SK-N-SH (cell line): ENCODE measurements at regions of chr1 and their contacts with region 1.

Region 1: DNA sequence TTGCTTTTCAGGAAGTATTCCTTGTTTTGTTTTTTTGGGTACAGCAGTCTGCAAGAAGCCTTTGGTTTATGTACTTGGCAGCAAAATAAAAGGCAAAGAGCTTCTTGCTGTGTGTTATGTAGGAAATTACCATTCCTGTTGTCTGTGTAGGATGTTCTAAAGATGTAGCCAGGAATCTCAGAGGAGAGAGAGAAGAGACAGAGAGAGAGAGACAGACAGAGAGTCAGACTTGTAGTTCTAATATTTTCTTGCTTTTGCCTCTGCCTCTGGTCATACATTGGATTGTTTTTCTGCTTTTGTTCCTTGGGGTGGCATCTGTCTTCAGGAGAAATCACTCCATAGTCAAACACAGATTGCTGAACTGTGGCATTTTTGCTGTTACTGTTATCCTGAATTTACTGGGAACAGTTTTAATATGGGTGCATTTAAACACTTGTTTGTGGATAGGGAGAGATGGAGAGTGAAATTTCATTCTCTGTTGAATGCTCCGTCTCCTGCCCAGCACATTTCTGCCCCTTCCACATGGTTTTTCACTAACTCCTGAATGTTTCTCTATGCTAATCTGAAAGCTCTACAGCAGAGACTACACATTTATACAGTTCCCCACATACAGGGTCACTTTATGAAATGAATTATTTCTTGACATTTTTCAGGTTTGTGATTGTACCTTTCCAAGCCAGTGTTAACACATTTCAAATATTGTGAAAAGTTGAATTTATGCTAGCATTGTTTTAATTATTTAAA is 49.8 kb downstream of the POU2F1 start:
- DNase-seq: no peak
- H3K4me3 ChIP-seq: no peak overlapping the region
- H3K27ac ChIP-seq: no peak overlapping the region
- H3K4me1 ChIP-seq: peaks cover 5 to 8% of the 10 kb centered on the region in 2 experiments; a peak in 3 of 4 replicates
- H3K27me3 ChIP-seq: no peaks in the 10 kb centered on the region
- CTCF ChIP-seq: no peak
- EP300 ChIP-seq: no peak
- RAD21 ChIP-seq: no peak; the same call in 1 of the 2 replicates

Region 2: DNA sequence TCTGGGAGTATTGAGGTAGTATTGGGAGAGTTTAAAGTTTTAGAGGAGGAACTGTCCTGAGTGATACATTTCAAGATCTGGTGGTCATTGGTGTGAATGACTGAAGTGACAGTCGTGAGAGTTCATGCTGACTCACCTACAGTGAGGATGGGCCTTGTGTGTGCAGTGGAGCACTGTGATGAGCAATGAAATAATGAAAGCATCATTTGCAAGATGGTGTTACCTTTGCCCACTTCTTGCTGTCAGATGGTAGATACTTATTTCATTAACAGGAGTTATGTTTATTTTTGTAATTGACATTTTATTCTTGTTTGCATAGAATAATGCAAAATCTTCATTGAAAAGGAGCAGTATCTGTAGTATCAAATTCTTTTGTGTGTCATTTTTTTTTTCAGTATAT is 20.8 kb before region 1 on chr1:
- CTCF ChIA-PET with region 1: interaction called, 14 read pairs
- POLR2A ChIA-PET with region 1: no interaction called
- DNase-seq: no peak
- H3K4me3 ChIP-seq: no peak overlapping the region
- H3K27ac ChIP-seq: no peak overlapping the region
- H3K4me1 ChIP-seq: peaks cover 0 to 2% of the 10 kb centered on the region in 2 experiments; a peak in 3 of 4 replicates
- H3K27me3 ChIP-seq: no peaks in the 10 kb centered on the region
- CTCF ChIP-seq: no peak
- EP300 ChIP-seq: no peak
- RAD21 ChIP-seq: no peak

Region 3: DNA sequence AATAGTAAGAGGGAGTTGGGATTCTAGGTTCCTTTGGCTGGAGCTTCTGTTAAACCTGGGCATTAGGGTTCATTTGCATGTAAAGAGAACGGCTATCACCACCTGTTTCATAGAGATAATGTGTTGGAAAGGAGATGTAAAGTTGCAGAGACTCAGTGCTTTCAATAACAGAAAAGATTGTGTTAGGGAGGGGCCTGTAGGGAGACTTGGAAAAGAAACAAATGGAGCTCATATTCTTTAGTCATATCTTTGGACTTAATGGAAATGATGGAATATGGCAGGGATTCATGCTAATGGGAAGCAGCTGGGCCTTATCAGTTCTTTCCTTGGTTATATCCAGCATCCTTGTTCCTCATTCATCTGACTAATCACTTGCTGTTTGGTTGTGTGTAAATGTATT is 102.9 kb after region 1 on chr1:
- CTCF ChIA-PET with region 1: interaction called, 32 read pairs
- POLR2A ChIA-PET with region 1: no interaction called
- DNase-seq: peak; percentile 65
- H3K4me3 ChIP-seq: no peak overlapping the region; a peak in 1 of 4 replicates
- H3K27ac ChIP-seq: peak overlapping the region in 1 of 2 experiments; percentile 78; a peak in 2 of 4 replicates
- H3K4me1 ChIP-seq: peaks cover 0 to 7% of the 10 kb centered on the region in 2 experiments; a peak in 2 of 4 replicates
- H3K27me3 ChIP-seq: no peaks in the 10 kb centered on the region
- CTCF ChIP-seq: no peak
- EP300 ChIP-seq: peak in 1 of 2 experiments; percentile 66; a peak in 2 of 4 replicates
- RAD21 ChIP-seq: no peak; the same call in 1 of the 2 replicates

Region 4: DNA sequence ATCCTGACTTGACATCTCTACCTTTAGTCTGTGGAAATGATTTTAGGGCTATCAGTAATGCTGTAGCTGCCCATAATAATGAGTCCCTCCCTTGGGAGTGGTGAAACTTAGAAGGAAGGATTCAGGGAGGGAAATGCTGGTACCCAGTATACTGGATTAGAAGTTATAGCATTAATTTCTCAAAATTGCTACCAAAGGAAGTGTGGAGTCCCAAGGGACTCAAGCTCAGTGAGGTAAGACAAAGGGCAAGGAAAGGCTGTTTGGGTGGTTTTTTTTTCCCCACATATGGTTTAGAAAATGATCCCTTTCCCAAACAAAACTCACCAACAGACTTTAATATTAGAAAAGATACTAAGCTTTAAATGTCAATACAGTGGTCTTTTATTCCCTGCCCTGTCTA is 147.9 kb after region 1 on chr1:
- CTCF ChIA-PET with region 1: interaction called, 15 read pairs
- POLR2A ChIA-PET with region 1: no interaction called
- DNase-seq: no peak
- H3K4me3 ChIP-seq: no peak overlapping the region
- H3K27ac ChIP-seq: no peak overlapping the region
- H3K4me1 ChIP-seq: peaks cover 0 to 2% of the 10 kb centered on the region in 2 experiments; a peak in 1 of 4 replicates
- H3K27me3 ChIP-seq: no peaks in the 10 kb centered on the region
- CTCF ChIP-seq: no peak
- EP300 ChIP-seq: no peak
- RAD21 ChIP-seq: no peak

Region 5: GRCh38 chr1:167454894-167455785 is 184.6 kb after region 1 on chr1:
- CTCF ChIA-PET with region 1: interaction called, 17 read pairs
- POLR2A ChIA-PET with region 1: interaction called, 3 read pairs
- DNase-seq: peak; percentile 87
- H3K4me3 ChIP-seq: peak overlapping the region; percentile 62 to 87
- H3K27ac ChIP-seq: peak overlapping the region in 1 of 2 experiments; percentile 45; a peak in 1 of 4 replicates
- H3K4me1 ChIP-seq: peaks cover 0 to 8% of the 10 kb centered on the region in 2 experiments; a peak in 1 of 4 replicates
- H3K27me3 ChIP-seq: peaks cover 6% of the 10 kb centered on the region; the same call in 1 of the 2 replicates
- CTCF ChIP-seq: no peak
- EP300 ChIP-seq: no peak
- RAD21 ChIP-seq: no peak

Region 6: DNA sequence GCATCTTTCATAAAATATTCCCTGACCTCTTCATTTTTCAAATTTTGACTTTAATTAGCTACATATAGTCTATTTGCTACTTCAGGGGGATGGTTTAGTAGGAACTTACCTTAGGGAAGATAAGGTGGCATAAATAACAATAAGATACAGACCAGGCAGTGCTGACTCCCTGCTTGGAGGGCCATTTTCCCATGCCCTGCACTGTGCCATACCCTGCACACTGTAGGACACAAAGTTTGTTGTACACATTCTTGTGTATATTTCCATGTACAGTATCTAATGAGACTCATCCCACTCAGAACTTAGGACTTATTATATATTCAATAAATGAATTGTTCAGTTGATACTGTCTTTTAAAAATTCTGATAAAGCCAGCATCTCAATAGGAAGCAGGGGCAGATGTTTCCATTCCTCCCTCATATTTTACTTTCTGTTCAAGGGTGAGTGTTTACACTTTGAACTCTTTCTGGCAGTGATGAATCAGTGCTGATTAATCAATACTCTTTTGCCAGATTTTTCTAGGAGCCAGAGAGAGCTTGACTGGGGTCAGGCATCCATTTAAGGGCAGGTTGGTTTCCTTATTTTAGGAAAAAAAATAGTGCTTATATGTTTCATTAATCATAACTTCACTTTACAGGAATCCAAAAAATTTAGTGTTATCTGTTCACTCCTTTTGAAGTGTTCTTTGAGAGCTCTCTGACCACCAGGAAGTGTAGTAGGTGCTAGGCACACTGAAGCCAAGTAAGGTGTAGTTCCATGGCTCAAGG is 481.9 kb after region 1 on chr1:
- CTCF ChIA-PET with region 1: no interaction called
- POLR2A ChIA-PET with region 1: no interaction called
- DNase-seq: no peak
- H3K4me3 ChIP-seq: no peak overlapping the region
- H3K27ac ChIP-seq: peak overlapping the region in 1 of 2 experiments; percentile 7; a peak in 1 of 4 replicates
- H3K4me1 ChIP-seq: peaks cover 23 to 26% of the 10 kb centered on the region in 2 experiments; a peak in 3 of 4 replicates
- H3K27me3 ChIP-seq: no peaks in the 10 kb centered on the region
- CTCF ChIP-seq: no peak
- EP300 ChIP-seq: no peak
- RAD21 ChIP-seq: no peak